ENCODE measurements at regions of chr2 and their contacts with region 1.

Region 1: GRCh38 chr2:161992526-161992925 is 81.5 kb downstream of the DPP4 start:
- DNase-seq: peak; percentile 85
- ATAC-seq: peak; percentile 84
- H3K4me3 Mint-ChIP-seq: peak overlapping the region; percentile 77
- H3K27ac Mint-ChIP-seq: peak overlapping the region; percentile 97
- H3K4me1 Mint-ChIP-seq: peaks cover 65% of the 10 kb centered on the region
- H3K27me3 Mint-ChIP-seq: no peaks in the 10 kb centered on the region
- CTCF ChIP-seq: no peak

Region 2: DNA sequence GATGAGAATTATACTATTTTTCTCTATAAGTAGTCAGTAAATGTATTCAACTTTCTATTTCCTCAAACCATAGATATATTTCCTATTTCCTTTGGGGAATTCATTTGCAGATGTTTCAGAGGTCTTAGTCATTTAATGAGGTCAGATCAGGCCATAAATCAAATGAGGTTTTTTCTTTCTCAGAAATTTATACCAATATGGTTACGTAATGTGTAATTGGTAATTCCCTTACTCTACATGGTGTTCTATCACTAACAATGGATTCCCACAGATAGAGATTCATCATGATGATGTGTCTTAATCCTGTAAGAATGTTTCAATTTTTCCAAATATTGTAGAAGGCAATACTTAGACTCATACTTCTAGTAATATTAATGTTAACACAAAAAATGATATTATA is 26.5 kb before region 1 on chr2:
- CTCF ChIA-PET with region 1: interaction called, 4 read pairs
- POLR2A ChIA-PET with region 1: interaction called, 7 read pairs
- intact Hi-C with region 1: loop called (anchors 2 kb)
- DNase-seq: no peak
- ATAC-seq: peak; percentile 81
- H3K4me3 Mint-ChIP-seq: no peak overlapping the region
- H3K27ac Mint-ChIP-seq: no peak overlapping the region
- H3K4me1 Mint-ChIP-seq: peaks cover 41% of the 10 kb centered on the region
- H3K27me3 Mint-ChIP-seq: no peaks in the 10 kb centered on the region
- CTCF ChIP-seq: no peak

Region 3: DNA sequence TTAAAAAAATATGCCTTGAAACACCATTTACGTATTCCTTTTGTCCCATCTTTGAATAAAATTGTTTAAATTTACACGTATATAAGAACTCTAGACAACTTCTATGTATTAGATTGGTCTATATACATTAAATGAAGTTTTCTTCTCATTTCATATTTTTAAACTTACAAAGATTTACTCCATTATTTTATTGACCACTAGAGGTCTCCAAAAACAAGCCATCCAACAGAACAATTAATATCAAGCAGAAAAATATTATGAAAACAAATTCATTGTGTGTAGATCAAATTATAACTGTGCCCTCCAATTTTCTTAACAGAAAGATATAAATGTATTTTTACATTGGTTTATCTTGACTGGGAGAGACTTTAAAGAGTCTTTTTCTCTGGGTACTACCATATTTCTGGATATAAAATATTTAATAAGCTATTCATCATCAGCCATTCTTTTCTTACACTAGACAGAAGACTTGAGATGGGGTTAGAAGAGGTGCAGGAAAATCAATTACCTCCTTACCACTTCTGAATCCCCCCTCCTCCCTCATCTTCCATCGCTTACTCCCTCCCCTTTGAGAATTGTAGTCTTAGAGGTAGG is 15.0 kb after region 1 on chr2:
- CTCF ChIA-PET with region 1: interaction called, 17 read pairs
- POLR2A ChIA-PET with region 1: interaction called, 10 read pairs
- intact Hi-C with region 1: no loop called
- DNase-seq: no peak
- ATAC-seq: no peak
- H3K4me3 Mint-ChIP-seq: no peak overlapping the region
- H3K27ac Mint-ChIP-seq: no peak overlapping the region
- H3K4me1 Mint-ChIP-seq: peaks cover 42% of the 10 kb centered on the region
- H3K27me3 Mint-ChIP-seq: no peaks in the 10 kb centered on the region
- CTCF ChIP-seq: peak; percentile 76

Region 4: DNA sequence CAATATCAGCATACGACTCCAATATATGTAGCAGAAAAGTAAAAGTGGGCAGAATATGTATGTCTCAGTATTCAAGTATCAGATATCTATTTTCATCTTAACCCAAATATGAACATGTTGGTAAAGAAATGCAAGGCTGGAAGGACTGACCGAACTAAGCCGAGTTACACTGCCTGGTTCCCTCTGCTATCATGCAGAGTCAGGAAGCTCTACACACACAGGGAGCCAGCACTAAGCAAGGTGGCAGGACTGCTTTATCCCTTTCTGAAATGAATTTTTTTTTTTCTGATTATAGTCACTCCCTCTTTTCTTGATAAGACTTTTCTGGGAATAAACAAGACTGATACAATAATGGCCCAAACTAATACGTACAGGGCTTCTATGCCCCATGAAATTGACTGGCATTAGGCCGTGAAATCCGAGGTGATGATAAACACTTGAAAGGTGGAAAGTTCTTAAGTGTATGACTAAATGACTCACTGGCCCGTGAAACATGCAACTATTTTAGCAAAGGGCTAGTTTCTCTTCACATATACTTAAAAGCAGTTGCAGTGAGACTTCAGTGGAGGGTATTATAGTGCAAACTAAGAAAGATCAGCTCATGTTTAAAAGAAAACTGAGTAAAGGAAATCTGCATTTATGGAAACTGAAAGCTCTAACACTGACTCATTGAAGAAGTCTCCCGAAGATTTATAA is 66.6 kb after region 1 on chr2:
- CTCF ChIA-PET with region 1: interaction called, 4 read pairs
- POLR2A ChIA-PET with region 1: interaction called, 5 read pairs
- intact Hi-C with region 1: loop called (anchors 5 kb)
- DNase-seq: peak; percentile 51
- ATAC-seq: peak; percentile 79
- H3K4me3 Mint-ChIP-seq: peak overlapping the region; percentile 52
- H3K27ac Mint-ChIP-seq: peak overlapping the region; percentile 94
- H3K4me1 Mint-ChIP-seq: peaks cover 86% of the 10 kb centered on the region
- H3K27me3 Mint-ChIP-seq: no peaks in the 10 kb centered on the region
- CTCF ChIP-seq: no peak

Measured in activated CD8-positive, alpha-beta T cell treated with anti-CD3 and anti-CD28 coated beads for 36 hours (primary cell).